ENCODE measurements at regions of chrX and their contacts with region 1.

Region 1: GRCh38 chrX:21985332-21985777 is 44.8 kb downstream of the SMS start:
- DNase-seq: peak; percentile 70
- H3K4me3 Mint-ChIP-seq: no peak overlapping the region
- H3K27ac Mint-ChIP-seq: no peak overlapping the region
- H3K4me1 Mint-ChIP-seq: peaks cover 3% of the 10 kb centered on the region
- H3K27me3 Mint-ChIP-seq: no peaks in the 10 kb centered on the region

Region 2: GRCh38 chrX:21612154-21612553 is 373.2 kb before region 1 on chrX:
- CTCF ChIA-PET with region 1: no interaction called
- DNase-seq: no peak
- H3K4me3 Mint-ChIP-seq: no peak overlapping the region
- H3K27ac Mint-ChIP-seq: no peak overlapping the region
- H3K4me1 Mint-ChIP-seq: no peaks in the 10 kb centered on the region
- H3K27me3 Mint-ChIP-seq: no peaks in the 10 kb centered on the region

Region 3: GRCh38 chrX:21870494-21870893 is 114.9 kb before region 1 on chrX:
- CTCF ChIA-PET with region 1: no interaction called
- DNase-seq: no peak
- H3K4me3 Mint-ChIP-seq: no peak overlapping the region
- H3K27ac Mint-ChIP-seq: no peak overlapping the region
- H3K4me1 Mint-ChIP-seq: no peaks in the 10 kb centered on the region
- H3K27me3 Mint-ChIP-seq: no peaks in the 10 kb centered on the region

Region 4: GRCh38 chrX:21972721-21973120 is 12.6 kb before region 1 on chrX:
- CTCF ChIA-PET with region 1: interaction called, 11 read pairs
- DNase-seq: peak; percentile 54
- H3K4me3 Mint-ChIP-seq: no peak overlapping the region
- H3K27ac Mint-ChIP-seq: peak overlapping the region; percentile 91
- H3K4me1 Mint-ChIP-seq: peaks cover 29% of the 10 kb centered on the region
- H3K27me3 Mint-ChIP-seq: no peaks in the 10 kb centered on the region

Region 5: DNA sequence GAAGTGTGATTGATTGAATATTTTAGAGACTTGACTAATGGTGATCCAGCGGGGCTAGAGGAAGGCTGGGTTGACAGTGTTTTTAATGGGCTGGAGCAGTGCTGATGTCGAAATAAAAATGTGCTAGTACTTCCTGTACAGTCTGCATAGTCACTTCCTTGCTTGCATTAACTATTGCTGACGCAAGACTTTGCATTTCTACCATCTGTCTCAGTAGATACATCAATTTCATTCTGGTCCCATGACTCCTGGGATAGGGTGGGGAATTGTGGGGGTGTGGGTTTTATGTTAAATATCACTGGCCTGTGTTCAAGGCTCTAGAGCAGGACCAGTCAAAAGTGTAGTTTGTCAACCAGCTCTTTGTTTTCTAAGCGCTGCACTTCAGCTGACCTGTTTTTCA is 11.5 kb after region 1 on chrX:
- CTCF ChIA-PET with region 1: interaction called, 13 read pairs
- DNase-seq: no peak
- H3K4me3 Mint-ChIP-seq: no peak overlapping the region
- H3K27ac Mint-ChIP-seq: no peak overlapping the region
- H3K4me1 Mint-ChIP-seq: peaks cover 20% of the 10 kb centered on the region
- H3K27me3 Mint-ChIP-seq: no peaks in the 10 kb centered on the region

Region 6: DNA sequence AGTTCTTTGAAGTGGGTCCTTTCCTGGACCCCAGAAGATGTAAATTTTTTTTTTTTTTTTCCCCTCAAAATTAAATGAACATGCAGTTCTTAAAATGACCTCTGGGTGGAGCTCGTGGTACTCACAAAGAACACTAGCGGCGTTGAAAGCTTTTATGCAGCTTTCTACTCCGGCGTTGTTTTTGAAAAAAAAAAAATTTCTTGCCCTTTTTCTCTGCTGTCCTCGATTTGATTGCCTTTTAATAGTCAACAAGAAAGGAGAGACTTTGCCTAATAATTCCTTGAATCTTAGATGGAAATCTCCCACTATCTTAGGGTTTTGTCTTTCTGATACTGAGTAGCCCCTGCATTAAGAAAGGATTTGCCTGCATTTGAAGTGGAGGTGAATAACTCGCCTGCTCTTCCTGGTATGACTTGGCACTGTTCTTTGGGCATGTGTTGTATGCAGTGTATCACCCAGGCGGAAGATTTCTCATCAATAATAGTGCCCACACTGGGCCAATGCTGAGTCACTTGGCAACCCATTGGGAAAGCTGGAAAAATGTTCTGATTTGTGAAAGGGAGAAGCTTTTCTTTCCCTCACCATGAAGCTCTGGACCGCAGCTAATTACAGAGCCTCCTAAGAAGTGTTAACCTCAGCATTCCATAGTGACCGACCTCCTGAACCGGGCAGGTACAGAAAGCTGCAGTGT is 150.8 kb after region 1 on chrX:
- CTCF ChIA-PET with region 1: interaction called, 15 read pairs
- DNase-seq: no peak
- H3K4me3 Mint-ChIP-seq: no peak overlapping the region
- H3K27ac Mint-ChIP-seq: no peak overlapping the region
- H3K4me1 Mint-ChIP-seq: no peaks in the 10 kb centered on the region
- H3K27me3 Mint-ChIP-seq: no peaks in the 10 kb centered on the region

Measured in activated naive CD4-positive, alpha-beta T cell treated with anti-CD3 and anti-CD28 coated beads, Interleukin-2, amount 10 ng/mL, durations not matched to agents 7 days and 5 days (primary cell).